ENCODE measurements at regions of chrX and their contacts with region 1.

Region 1: GRCh38 chrX:43654431-43655150 is 1.5 kb upstream of the MAOA start:
- DNase-seq: peak; percentile 93 to 96 (median 96)
- ATAC-seq: peak; percentile 96
- H3K4me3 ChIP-seq: peak overlapping the region; percentile 22 to 48
- H3K27ac ChIP-seq: peak overlapping the region; percentile 82 to 92 (median 88)
- H3K4me1 ChIP-seq: no peaks in the 10 kb centered on the region
- H3K27me3 ChIP-seq: no peaks in the 10 kb centered on the region
- CTCF ChIP-seq: peak in 6 of 7 experiments; percentile 20 to 52 (median 44)
- POLR2A ChIP-seq: peak; percentile 68 to 87 (median 82)

Region 2: GRCh38 chrX:43741843-43742573 is 87.4 kb after region 1 on chrX:
- intact Hi-C with region 1: loop called (anchors 10 kb)
- DNase-seq: peak in 1 of 4 donors; percentile 20
- ATAC-seq: peak; percentile 24
- H3K4me3 ChIP-seq: no peak overlapping the region
- H3K27ac ChIP-seq: peak overlapping the region in 1 of 4 donors; percentile 32
- H3K4me1 ChIP-seq: peaks cover 29% of the 10 kb centered on the region
- H3K27me3 ChIP-seq: no peaks in the 10 kb centered on the region
- CTCF ChIP-seq: no peak
- POLR2A ChIP-seq: no peak

Region 3: DNA sequence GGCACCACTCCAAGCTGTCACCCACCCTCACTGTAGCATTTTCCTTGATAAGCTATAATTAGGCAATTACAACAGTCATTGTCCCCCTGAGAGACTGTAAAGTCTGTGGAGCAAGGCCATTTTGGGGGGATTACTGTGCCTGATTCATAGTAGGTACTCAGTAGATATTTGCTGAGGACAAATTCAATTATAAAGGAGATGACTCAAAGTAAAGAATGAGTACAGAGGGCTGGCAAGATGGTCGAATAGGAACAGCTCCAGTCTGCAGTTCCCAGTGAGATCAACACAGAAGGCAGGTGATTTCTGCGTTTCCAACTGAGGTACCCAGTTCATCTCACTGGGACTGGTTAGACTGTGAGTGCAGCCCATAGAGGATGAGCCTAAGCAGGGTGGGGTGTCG is 185.7 kb after region 1 on chrX:
- intact Hi-C with region 1: no loop called
- DNase-seq: no peak
- ATAC-seq: no peak
- H3K4me3 ChIP-seq: no peak overlapping the region
- H3K27ac ChIP-seq: no peak overlapping the region
- H3K4me1 ChIP-seq: no peaks in the 10 kb centered on the region
- H3K27me3 ChIP-seq: no peaks in the 10 kb centered on the region
- CTCF ChIP-seq: no peak
- POLR2A ChIP-seq: no peak